Psoas muscle (tissue), 8 donors: ENCODE measurements at regions of chr13 and their contacts with region 1.

Region 1: DNA sequence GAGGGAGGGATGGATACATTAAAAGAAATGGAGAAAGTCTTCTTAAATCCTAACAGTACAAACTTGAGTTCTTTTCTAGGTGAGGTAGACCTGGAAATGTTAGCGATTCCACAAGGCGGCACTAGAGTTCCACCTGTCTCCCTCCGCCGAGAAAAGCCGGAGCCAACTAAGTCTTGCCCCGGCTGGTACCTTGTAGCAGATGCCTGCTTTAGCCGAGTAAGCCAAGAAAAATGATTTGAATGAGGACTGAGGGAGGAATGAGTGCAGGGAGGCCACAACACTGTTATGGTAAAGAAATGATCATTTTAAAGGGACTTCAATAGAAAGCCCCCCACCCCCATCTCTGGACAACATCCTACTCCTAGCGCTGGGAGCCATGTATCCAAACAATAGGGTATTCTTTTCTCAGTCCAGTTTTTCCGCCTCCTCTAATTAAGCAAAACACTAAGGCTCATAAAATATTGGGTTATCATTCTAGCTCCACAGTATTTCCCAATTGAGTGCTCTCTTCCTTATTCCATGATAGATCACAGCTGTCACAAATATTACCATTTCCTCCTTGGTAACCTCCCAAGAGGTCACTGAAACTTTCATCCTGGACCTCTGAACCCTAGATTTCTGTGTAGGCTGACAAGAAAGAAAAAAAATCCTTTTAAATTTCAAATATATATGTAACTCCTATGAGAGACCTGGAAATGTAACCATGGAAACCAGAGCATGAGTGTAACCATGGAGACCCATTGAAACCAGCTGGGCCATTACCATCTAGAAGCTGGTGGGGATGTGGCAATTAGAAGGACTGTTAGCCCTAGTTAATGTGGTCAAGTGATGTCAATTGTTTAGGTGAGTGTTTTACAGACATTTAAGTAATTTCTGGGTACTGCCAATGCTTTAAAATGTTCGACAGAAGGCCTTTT is 58.3 kb downstream of the GPALPP1 start:
- DNase-seq: peak; percentile 55 to 72
- ATAC-seq: peak; percentile 84 to 97 (median 88)
- H3K4me3 ChIP-seq: peak overlapping the region; percentile 64
- H3K27ac ChIP-seq: no peak overlapping the region
- H3K4me1 ChIP-seq: peaks cover 4% of the 10 kb centered on the region
- H3K27me3 ChIP-seq: no peaks in the 10 kb centered on the region
- CTCF ChIP-seq: peak; percentile 86

Region 2: DNA sequence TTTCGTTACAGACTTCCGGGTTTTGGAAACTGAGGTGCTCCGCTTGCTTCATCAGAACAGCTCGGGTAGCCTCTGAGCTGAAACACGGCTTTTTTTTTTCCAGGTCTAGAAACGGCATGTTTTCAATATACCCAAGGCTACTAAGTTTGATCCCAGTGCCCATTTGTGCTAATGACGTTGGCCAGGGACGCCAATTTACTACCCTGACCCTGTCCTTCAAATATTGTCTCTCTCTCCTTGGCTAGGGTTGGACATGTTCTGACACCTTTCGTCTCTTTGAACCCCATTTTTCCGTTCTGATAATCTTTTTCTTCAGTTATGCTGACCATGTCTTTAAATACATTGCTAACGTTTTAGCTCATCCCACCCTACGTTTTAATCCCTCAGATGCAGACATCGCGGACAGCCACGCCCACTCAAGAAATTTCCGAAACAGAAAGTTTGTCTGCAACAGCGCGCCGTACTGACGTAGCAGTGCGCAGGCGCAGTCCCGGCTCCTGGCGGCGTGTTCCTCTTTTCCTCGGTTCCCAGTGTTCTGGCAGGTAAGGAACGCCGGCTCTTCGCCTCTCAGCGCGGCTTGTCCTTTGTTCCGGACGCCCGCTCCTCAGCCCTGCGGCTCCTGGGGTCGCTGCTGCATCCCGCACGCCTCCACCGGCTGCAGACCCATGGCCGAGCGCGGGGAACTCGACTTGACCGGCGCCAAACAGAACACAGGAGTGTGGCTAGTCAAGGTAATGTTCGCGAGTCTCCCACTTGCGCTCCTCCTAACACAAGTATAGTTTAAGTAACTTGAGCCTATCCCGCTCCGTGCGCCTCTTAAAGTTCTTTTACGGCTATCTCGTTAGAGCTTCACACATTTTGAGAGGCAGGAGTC is 72.6 kb after region 1 on chr13 and contains the start of gene GTF2F2:
- intact Hi-C with region 1: loop called in 1 of 2 experiments (anchors 5 kb)
- DNase-seq: peak; percentile 89 to 94
- ATAC-seq: peak; percentile 93 to 98 (median 96)
- H3K4me3 ChIP-seq: peak within 1 kb of the TSS; percentile 87
- H3K27ac ChIP-seq: peak within 1 kb of the TSS; percentile 82
- H3K4me1 ChIP-seq: peaks cover 12% of the 10 kb centered on the region
- H3K27me3 ChIP-seq: no peaks in the 10 kb centered on the region
- CTCF ChIP-seq: no peak
- total RNA-seq, gene GTF2F2: 12.9 to 23.2 (median 15.4) TPM

Region 3: DNA sequence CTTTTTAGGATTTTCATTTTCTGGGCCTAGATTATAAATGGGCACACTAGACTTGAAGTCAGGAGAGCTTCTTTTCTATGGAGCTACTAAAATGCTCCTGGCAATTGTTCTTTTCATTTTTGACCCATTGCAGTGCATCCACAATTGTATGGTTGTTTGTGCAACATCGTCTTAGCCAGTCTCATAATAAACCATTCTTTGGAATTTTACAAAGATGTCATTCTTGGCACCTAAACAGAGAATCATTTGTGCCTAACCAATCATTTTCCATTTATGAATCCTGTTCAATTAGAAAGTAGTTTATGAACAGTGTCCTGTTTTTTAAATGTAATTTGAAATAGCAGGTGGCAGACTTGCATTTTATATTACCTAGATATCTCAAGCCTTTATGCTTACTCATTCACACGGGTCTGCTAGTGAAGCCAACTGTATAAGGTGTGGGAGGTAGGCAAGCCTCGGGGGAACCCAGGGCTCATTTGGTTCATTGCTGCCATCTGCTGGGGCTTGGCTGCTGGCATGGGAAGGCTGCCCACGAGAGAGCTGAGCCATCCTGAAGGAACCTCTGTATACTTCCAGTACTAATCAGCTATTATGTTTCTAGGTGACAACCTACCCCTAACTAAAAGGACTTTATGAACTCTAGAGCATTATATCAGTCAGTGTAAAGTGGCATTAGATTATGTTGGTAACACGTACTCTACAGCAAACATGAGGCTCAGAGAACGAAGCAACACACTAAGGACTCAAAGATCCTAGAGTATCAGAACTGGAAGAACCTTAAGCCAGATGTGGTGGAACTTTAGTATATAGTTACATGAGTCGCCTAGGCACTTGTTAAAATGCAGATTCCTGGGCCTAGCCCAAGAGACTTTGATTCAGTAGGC is 233.3 kb after region 1 on chr13:
- intact Hi-C with region 1: loop called (anchors 1 to 2 kb)
- DNase-seq: peak; percentile 45 to 81
- ATAC-seq: peak; percentile 97 to 99 (median 99)
- H3K4me3 ChIP-seq: no peak overlapping the region
- H3K27ac ChIP-seq: no peak overlapping the region
- H3K4me1 ChIP-seq: peaks cover 6% of the 10 kb centered on the region
- H3K27me3 ChIP-seq: no peaks in the 10 kb centered on the region
- CTCF ChIP-seq: peak; percentile 76

Region 4: DNA sequence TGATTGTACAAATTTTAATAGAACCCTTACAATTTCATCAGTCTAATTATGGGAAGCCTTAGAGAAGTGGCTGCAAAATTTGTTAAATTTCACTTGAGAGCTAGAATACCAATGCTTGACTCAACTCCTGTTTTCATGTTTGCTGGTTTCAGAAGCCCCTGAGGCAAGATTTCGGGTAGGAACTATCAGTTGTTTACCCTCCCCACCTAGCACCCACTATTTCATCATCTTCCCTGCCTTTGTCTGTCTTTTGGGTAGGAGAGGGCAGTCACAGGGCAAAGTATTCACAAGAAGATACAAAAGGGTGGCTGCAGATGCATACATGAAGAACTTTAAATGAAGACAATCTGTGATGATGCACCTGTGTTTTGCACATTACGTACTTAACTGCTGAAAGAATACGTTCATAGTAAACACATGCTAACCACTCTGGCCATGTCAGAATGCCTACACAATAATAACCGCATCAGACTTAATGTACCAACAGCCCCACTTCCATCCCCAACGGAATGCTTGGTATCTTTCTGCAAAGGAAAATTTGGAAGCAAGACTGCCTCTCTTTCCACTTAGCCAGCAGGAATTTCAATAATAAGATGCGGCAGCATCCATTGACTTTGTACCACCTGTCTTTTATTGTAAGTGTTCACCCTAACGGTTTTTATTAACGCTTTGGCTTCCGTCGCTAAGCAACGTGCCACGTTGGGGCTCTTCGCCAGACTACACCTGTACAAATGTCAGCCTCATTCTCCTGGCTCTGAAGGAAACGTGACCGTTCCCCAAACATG is 262.9 kb after region 1 on chr13:
- intact Hi-C with region 1: loop called (anchors 1 to 5 kb)
- DNase-seq: no peak
- ATAC-seq: no peak
- H3K4me3 ChIP-seq: peak overlapping the region; percentile 62
- H3K27ac ChIP-seq: no peak overlapping the region
- H3K4me1 ChIP-seq: peaks cover 8% of the 10 kb centered on the region
- H3K27me3 ChIP-seq: no peaks in the 10 kb centered on the region
- CTCF ChIP-seq: no peak